ENCODE measurements at regions of chr1 and their contacts with region 1.

Region 1: GRCh38 chr1:19096036-19096833 is 113.8 kb downstream of the UBR4 start:
- DNase-seq: peak; percentile 55
- H3K4me3 Mint-ChIP-seq: no peak overlapping the region
- H3K27ac Mint-ChIP-seq: no peak overlapping the region
- H3K4me1 Mint-ChIP-seq: no peaks in the 10 kb centered on the region
- H3K27me3 Mint-ChIP-seq: no peaks in the 10 kb centered on the region
- CTCF ChIP-seq: peak; percentile 57

Region 2: DNA sequence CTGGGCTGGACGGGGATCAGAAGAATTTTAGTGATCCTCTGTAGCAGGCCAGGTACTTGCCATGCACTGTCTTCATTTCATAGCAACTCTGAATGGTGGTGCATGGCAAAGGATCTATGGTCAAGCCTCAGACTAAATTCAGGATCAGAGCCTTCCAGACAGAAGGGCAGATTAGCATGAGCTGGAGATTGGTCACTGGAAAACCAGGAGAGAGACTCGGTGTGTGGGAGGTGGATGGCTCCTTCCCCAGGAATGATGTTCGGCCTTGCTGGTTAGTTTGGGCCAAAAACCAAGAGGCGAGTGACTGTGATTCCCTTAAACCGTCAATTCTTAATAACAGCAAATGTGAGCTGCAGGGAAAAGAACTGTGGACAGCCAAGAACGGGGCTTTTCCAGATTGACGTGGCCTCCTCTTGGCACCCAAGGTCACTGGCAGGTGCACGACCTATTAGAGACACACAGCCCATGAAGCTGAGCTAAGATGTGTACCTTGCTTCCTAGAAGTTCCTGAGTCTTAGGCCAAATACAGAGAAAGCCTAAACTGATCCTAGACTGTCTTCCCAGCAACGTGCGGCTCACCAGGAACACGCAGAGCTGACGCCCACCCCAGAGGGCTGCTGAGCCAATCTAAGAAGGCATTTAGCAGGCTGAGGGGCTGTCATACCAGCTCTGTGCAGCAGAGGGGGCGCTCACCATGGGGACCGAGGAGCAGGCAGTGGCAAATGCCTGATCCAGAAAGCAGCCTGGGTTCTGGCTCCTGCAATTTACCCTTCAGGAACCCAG is 212.4 kb before region 1 on chr1:
- CTCF ChIA-PET with region 1: interaction called, 27 read pairs
- POLR2A ChIA-PET with region 1: interaction called, 4 read pairs
- intact Hi-C with region 1: loop called (anchors 1 kb)
- DNase-seq: peak; percentile 65
- H3K4me3 Mint-ChIP-seq: no peak overlapping the region
- H3K27ac Mint-ChIP-seq: no peak overlapping the region
- H3K4me1 Mint-ChIP-seq: peaks cover 5% of the 10 kb centered on the region
- H3K27me3 Mint-ChIP-seq: no peaks in the 10 kb centered on the region
- CTCF ChIP-seq: peak; percentile 86

Region 3: DNA sequence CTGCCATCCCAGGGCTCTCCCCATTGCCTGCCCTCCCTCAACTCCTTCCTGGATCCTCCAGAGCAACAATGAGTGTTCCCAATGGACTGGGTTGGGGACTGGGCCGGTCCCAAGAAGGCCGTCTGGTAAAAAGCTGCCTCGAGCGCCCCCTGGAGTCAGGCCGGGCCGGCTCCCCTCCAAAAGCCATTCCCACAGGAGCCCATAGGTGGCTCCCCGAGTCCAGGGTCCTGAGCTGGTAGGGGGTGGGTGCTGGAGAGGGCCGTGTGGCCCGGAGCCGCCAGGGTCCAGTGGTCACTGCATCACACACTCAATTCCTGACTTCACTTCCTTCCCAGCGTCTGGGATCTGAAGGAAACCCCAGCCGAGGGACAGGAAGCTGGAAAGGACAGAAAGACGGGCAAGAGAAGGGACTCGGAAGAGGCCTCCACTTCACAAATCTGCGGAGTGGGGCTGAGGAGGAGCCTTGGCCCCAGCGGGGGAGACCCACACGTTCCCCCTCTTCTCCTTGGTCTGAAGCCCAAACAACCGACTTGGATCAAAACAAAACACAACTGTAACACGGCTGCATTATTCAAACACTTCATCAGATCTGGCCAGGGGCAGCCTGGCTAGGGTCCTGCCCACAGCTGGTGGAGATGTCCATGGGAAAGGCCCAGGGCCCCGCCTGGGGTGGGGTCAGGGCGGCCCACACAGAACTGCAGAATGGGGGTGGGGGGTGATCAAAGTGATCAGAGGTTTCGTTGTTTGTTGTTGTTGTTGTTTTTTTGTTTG is 183.0 kb before region 1 on chr1:
- CTCF ChIA-PET with region 1: interaction called, 52 read pairs
- POLR2A ChIA-PET with region 1: no interaction called
- intact Hi-C with region 1: no loop called
- DNase-seq: peak; percentile 78
- H3K4me3 Mint-ChIP-seq: no peak overlapping the region
- H3K27ac Mint-ChIP-seq: no peak overlapping the region
- H3K4me1 Mint-ChIP-seq: no peaks in the 10 kb centered on the region
- H3K27me3 Mint-ChIP-seq: no peaks in the 10 kb centered on the region
- CTCF ChIP-seq: peak; percentile 99

Region 4: GRCh38 chr1:18949686-18950400 is 146.4 kb before region 1 on chr1:
- CTCF ChIA-PET with region 1: interaction called, 7 read pairs
- POLR2A ChIA-PET with region 1: interaction called, 3 read pairs
- intact Hi-C with region 1: loop called (anchors 5 kb)
- DNase-seq: peak; percentile 48
- H3K4me3 Mint-ChIP-seq: peak overlapping the region; percentile 64
- H3K27ac Mint-ChIP-seq: peak overlapping the region; percentile 88
- H3K4me1 Mint-ChIP-seq: peaks cover 59% of the 10 kb centered on the region
- H3K27me3 Mint-ChIP-seq: no peaks in the 10 kb centered on the region
- CTCF ChIP-seq: no peak

Region 5: GRCh38 chr1:18972531-18972930 is 123.7 kb before region 1 on chr1:
- CTCF ChIA-PET with region 1: interaction called, 8 read pairs
- POLR2A ChIA-PET with region 1: interaction called, 3 read pairs
- intact Hi-C with region 1: loop called (anchors 5 kb)
- DNase-seq: peak; percentile 51
- H3K4me3 Mint-ChIP-seq: no peak overlapping the region
- H3K27ac Mint-ChIP-seq: no peak overlapping the region
- H3K4me1 Mint-ChIP-seq: no peaks in the 10 kb centered on the region
- H3K27me3 Mint-ChIP-seq: no peaks in the 10 kb centered on the region
- CTCF ChIP-seq: peak; percentile 30

Region 6: DNA sequence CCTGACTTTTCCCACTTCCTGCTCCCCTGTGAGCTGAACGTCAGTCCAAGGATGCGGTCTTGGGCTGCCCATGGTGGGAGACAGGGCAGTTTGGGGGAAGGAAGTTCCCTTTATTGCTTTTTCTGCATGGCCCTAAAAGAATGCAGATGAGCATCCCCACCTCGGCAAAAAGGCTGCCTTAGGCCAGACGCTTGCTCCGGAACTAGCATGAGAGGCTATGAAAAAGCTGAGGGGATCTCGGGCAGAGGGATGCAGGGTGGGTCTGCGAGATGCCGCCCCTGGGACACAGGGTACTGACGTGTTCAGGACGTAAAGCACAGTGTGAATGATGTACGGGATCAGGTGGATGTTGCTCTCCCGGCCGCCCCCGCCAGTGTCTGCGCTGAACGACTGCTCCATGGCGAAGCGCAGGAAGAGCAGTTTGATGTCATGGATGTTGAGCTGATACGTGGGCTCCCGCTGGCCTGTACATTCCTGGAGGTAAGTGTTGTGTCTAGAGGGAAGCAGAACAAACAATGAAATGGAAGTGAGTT is 12.0 kb before region 1 on chr1:
- CTCF ChIA-PET with region 1: interaction called, 12 read pairs
- POLR2A ChIA-PET with region 1: interaction called, 4 read pairs
- intact Hi-C with region 1: no loop called
- DNase-seq: no peak
- H3K4me3 Mint-ChIP-seq: no peak overlapping the region
- H3K27ac Mint-ChIP-seq: no peak overlapping the region
- H3K4me1 Mint-ChIP-seq: peaks cover 23% of the 10 kb centered on the region
- H3K27me3 Mint-ChIP-seq: no peaks in the 10 kb centered on the region
- CTCF ChIP-seq: no peak

Measured in MCF 10A (cell line).